Mammary epithelial cell (primary cell): ENCODE measurements at regions of chr15 and their contacts with region 1.

Region 1: DNA sequence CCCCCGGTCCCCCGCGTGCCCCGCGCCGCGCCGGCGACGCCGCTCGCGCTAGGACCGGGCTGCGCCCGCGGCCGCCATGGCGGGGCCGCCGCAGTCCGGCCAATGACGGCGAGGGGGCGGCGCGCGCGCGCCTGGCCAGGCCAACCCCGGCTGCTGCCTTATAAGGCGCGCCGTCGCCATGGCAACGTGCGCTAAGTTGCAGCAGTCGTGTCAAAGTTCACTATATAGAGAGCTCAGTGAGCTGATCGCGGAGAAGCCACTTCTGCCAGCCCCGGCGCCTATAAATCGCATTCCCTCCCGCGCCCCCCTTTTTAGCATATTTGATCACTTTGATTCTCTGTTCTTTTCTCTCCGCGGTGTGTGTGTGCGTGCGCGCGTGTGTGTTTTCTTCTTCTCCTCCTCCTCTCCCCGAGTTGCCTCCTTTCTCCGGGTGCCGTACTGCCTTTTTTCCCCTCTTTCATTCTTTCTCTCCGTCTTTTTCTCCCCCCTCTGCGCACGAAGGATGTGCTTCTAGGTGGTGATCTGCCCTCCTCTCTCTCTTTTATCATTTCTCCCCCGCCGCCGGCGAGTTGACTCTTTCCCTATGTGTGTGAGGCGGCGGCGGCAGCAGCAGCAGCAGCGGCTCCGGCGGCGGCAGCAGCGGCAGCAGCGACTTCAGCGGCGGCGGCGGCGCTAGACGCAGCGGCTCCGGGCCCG is at the start of gene NR2F2:
- DNase-seq: peak; percentile 96
- H3K4me3 ChIP-seq: peak within 1 kb of the TSS; percentile 76 to 96 (median 91)
- H3K27ac ChIP-seq: peak within 1 kb of the TSS; percentile 88
- H3K4me1 ChIP-seq: peaks cover 33% of the 10 kb centered on the region
- H3K27me3 ChIP-seq: no peaks in the 10 kb centered on the region
- CTCF ChIP-seq: no peak
- total RNA-seq, gene NR2F2: 3.2 to 34.1 TPM

Region 2: DNA sequence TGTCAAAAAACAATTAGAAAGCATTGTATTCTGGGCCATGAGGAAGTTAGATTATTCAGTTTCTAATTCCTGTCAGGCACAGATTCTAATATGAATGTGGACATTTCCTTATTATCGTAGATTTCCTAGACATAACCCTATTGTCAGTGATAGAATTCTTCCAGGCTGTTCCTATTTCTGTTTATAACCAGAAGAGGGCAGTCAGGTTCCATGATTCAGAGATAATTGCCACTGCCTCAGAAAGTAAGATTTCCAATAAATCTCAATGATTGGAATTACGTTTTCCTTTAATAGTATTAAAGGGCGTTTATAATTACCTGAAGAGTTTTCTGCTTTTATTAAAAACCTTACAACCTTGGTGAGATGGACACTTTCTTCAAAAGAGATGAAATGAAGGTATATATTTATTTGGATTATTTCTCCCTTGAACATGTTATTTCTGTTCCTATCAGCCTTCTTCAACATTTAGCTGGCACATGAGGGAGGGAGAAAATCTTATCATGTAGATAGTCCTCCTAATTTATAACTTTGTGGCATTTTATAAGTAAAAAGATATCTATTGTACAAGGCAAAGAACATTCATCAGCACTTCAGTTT is 1660.1 kb before region 1 on chr15:
- CTCF ChIA-PET with region 1: no interaction called
- dilution Hi-C with region 1: no loop called
- in situ Hi-C with region 1: loop called in 1 of 2 experiments (anchors 25 kb)
- intact Hi-C with region 1: loop called (anchors 1 kb)
- DNase-seq: peak; percentile 40
- H3K4me3 ChIP-seq: no peak overlapping the region
- H3K27ac ChIP-seq: no peak overlapping the region
- H3K4me1 ChIP-seq: peaks cover 16% of the 10 kb centered on the region
- H3K27me3 ChIP-seq: no peaks in the 10 kb centered on the region
- CTCF ChIP-seq: peak; percentile 68 to 69

Region 3: DNA sequence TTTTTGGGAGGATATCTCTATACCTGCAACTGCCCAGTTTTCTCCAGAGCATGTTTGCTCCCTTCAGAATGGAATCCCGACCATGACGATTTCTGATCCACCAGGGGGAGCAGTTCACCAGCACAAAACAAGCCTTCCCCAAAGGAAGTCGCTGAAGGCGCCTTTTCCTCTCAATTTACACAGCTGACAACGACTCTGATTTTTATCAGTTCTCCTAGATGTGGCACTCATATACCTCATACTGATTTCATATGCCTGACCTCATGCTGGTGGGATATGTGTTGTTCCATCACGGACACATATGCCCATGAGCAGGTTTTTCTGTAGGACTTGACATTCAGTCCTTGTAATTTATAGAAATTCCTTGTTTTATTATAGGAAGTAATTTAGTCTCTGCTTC is 1071.1 kb before region 1 on chr15:
- CTCF ChIA-PET with region 1: interaction called, 3 read pairs
- dilution Hi-C with region 1: no loop called
- in situ Hi-C with region 1: loop called in 1 of 2 experiments (anchors 10 kb)
- intact Hi-C with region 1: loop called (anchors 5 kb)
- DNase-seq: peak; percentile 58
- H3K4me3 ChIP-seq: no peak overlapping the region
- H3K27ac ChIP-seq: no peak overlapping the region
- H3K4me1 ChIP-seq: peaks cover 18% of the 10 kb centered on the region
- H3K27me3 ChIP-seq: no peaks in the 10 kb centered on the region
- CTCF ChIP-seq: peak; percentile 67 to 81

Region 4: DNA sequence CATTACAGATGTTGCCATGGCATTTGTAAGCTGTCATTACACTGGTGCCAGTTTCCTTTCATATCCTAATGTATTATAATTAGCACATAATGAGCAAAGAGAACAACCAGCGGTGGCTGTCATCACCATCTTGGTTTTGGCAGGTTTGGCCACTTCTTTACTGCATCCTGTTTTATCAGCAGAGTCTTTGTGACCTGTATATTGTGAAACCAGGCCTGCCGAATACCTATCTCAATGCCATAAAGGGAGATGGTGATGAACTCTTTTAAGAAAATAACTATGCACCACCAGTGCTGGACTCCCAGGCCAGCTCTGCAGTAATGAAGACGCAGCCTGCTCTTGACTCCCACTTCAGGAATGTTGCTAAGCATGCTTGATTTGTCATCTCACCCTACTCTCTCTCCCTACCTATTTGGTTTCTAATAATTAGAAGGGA is 458.2 kb before region 1 on chr15:
- CTCF ChIA-PET with region 1: no interaction called
- dilution Hi-C with region 1: no loop called
- in situ Hi-C with region 1: no loop called
- intact Hi-C with region 1: loop called (anchors 5 kb)
- DNase-seq: peak; percentile 91
- H3K4me3 ChIP-seq: no peak overlapping the region
- H3K27ac ChIP-seq: peak overlapping the region; percentile 48
- H3K4me1 ChIP-seq: peaks cover 26% of the 10 kb centered on the region
- H3K27me3 ChIP-seq: no peaks in the 10 kb centered on the region
- CTCF ChIP-seq: no peak

Region 5: DNA sequence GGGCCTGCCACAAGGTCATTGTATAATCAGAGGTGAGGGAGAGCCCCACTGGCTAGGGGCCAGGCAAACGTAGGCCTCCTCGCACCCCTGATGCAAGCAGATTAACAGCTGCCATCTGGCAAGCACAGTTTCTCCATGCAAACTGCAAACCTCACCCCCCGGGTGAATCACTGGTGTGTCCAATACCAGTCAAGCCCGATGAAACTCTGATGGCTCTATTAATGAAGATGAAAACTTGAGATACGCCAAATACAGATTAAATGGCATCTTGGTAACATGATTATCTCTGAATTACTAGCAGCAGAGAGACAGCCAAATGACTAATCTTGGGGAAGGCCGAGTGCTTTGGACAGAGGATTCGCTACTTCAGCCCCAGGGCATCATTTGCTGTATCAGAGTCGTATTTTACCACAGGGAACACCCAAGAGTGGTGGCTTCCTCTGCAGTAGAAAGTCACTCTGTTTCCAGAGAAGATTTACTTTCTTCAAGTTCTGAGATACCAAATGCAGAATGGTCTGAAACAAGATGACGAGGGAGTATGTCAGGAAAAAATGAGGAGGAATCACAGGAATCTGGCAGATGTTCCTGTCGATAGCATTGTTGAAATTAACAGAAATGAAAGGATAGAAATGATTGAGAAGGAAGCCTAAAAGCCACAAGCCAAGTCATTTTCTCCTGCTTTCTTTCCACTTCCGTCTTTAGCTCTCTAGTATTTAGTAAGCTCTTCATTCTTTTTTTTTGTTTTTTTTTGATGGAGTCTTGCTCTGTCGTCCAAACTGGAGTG is 96.3 kb before region 1 on chr15:
- CTCF ChIA-PET with region 1: no interaction called
- dilution Hi-C with region 1: no loop called
- in situ Hi-C with region 1: no loop called
- intact Hi-C with region 1: loop called (anchors 2 kb)
- DNase-seq: peak; percentile 78
- H3K4me3 ChIP-seq: no peak overlapping the region
- H3K27ac ChIP-seq: no peak overlapping the region
- H3K4me1 ChIP-seq: peaks cover 36% of the 10 kb centered on the region
- H3K27me3 ChIP-seq: no peaks in the 10 kb centered on the region
- CTCF ChIP-seq: no peak

Region 6: DNA sequence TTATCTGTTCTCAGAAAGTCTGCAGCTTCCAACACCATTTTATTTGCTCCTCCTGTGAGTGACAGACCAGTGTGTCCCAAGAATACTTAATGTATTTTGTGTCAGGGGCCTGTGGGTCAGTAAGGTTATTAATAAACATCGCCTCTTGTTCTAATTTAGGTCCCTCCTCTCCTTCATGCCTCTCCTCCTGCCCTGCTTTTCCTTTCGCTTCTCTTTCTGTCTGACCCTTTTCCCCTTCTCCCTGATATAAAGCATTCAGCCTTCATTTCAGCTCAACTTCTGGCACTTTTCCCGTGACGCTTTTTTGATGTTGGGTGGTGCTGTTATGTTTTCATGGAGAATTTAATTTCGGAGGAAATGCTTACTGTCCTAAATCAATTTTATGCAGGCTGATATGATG is 29.8 kb before region 1 on chr15:
- CTCF ChIA-PET with region 1: no interaction called
- dilution Hi-C with region 1: no loop called
- in situ Hi-C with region 1: no loop called
- intact Hi-C with region 1: no loop called
- DNase-seq: no peak
- H3K4me3 ChIP-seq: no peak overlapping the region
- H3K27ac ChIP-seq: no peak overlapping the region
- H3K4me1 ChIP-seq: peaks cover 6% of the 10 kb centered on the region
- H3K27me3 ChIP-seq: no peaks in the 10 kb centered on the region
- CTCF ChIP-seq: no peak

Region 7: DNA sequence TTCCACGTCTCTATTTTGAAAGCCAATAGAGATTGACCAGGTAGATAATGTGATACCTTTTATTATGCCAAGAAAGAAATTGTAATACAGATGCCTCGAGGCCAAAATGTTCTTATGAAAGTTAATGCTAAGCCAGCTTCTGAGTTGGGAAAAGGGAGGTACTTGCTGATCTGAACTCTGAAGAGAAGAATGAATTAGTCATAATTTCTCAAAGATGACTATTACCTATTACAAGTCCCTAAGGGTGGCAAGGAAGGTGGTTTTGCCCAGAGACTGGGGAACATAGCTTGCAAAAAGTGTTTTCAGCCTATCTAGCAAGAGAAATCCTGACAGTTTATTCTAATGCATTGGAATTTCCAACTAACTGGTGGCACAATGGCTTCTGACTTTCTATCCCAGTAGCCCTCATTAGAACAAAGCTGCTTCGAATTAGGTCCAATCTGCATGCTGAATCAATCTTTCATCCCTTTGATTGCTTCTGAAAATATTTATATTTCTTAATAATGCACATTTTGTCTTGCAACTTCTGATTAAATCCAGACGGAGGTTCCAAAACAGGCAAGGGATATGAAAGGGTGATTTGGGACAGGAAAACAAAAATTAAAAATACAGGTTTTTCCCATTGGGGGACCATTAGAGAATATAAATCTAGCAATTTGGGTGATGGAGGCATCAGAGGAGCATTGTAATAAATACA is 17.8 kb before region 1 on chr15:
- CTCF ChIA-PET with region 1: interaction called, 18 read pairs
- dilution Hi-C with region 1: no loop called
- in situ Hi-C with region 1: no loop called
- intact Hi-C with region 1: no loop called
- DNase-seq: peak; percentile 94
- H3K4me3 ChIP-seq: no peak overlapping the region
- H3K27ac ChIP-seq: peak overlapping the region; percentile 34
- H3K4me1 ChIP-seq: peaks cover 20% of the 10 kb centered on the region
- H3K27me3 ChIP-seq: no peaks in the 10 kb centered on the region
- CTCF ChIP-seq: no peak

Region 8: DNA sequence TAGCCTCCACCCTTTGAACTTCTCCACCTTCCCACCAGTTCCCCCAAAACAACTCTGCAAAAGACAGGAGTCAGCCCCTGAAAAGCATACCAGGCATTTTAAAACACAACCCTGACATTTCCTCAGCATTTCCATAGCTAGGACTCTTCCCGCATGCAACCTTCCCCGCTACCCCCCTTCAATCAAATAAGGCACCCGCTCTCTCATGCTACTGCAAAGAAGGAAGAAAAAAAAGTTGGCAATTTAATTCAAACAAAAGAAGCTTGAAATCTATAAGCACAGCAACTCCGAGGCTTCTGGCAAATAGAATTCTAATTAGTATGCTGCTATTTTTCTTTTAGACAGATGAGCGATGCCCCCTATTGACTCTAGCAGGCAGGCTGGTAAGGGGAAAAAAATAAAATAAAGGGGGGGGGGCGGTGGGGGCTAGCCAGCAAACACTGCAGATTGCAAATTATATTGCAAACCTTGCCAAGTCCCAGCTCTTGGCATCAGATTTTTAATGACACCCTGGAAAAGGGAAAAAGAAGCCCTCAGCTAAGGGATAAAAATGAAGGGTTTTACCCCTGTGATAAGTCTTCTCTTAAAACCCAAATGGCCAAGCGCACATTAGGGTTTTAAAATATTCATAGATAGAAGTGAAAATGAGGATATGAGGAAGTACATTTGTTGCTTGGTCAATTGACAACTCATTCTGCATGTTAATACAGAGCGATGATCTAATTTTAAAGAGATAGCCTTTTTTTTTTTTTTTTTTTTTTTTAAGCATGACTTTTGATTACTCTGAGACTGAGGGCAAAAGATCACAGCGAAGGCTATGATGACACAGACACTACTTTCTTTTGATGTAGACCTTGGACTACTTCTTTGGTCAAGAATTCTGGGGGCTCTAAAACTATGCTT is 255.1 kb after region 1 on chr15:
- CTCF ChIA-PET with region 1: no interaction called
- dilution Hi-C with region 1: no loop called
- in situ Hi-C with region 1: no loop called
- intact Hi-C with region 1: loop called (anchors 1 kb)
- DNase-seq: no peak
- H3K4me3 ChIP-seq: no peak overlapping the region
- H3K27ac ChIP-seq: no peak overlapping the region
- H3K4me1 ChIP-seq: no peaks in the 10 kb centered on the region
- H3K27me3 ChIP-seq: peaks cover 4% of the 10 kb centered on the region
- CTCF ChIP-seq: peak; percentile 12 to 39